H1 (cell line): ENCODE measurements at regions of chr6 and their contacts with region 1.

Region 1: GRCh38 chr6:125858427-125859320 is 67.9 kb downstream of the NCOA7 start:
- DNase-seq: peak; percentile 68 to 69
- H3K4me3 ChIP-seq: no peak overlapping the region
- H3K27ac ChIP-seq: no peak overlapping the region
- H3K4me1 ChIP-seq: no peaks in the 10 kb centered on the region
- H3K27me3 ChIP-seq: no peaks in the 10 kb centered on the region
- CTCF ChIP-seq: peak; percentile 84 to 97 (median 90)
- EP300 ChIP-seq: no peak
- POLR2A ChIP-seq: no peak
- RAD21 ChIP-seq: peak; percentile 87 to 92

Region 2: GRCh38 chr6:125753218-125753936 is 105.3 kb before region 1 on chr6:
- CTCF ChIA-PET with region 1: no interaction called
- POLR2A ChIA-PET with region 1: no interaction called
- DNase-seq: no peak
- H3K4me3 ChIP-seq: peak overlapping the region in 1 of 4 experiments; percentile 30; a peak in 1 of 8 replicates
- H3K27ac ChIP-seq: no peak overlapping the region
- H3K4me1 ChIP-seq: peaks cover 0 to 14% (median 2%) of the 10 kb centered on the region in 4 experiments; a peak in 4 of 7 replicates
- H3K27me3 ChIP-seq: peaks cover 0 to 10% (median 8%) of the 10 kb centered on the region in 4 experiments; a peak in 6 of 7 replicates
- CTCF ChIP-seq: peak in 1 of 3 experiments; percentile 34; a peak in 1 of 4 replicates
- EP300 ChIP-seq: no peak
- POLR2A ChIP-seq: no peak
- RAD21 ChIP-seq: peak in 1 of 2 experiments; percentile 15; a peak in 2 of 4 replicates

Region 3: GRCh38 chr6:125812394-125813292 is 46.0 kb before region 1 on chr6:
- CTCF ChIA-PET with region 1: interaction called, 10 read pairs
- POLR2A ChIA-PET with region 1: no interaction called
- DNase-seq: no peak
- H3K4me3 ChIP-seq: no peak overlapping the region
- H3K27ac ChIP-seq: no peak overlapping the region
- H3K4me1 ChIP-seq: no peaks in the 10 kb centered on the region
- H3K27me3 ChIP-seq: no peaks in the 10 kb centered on the region
- CTCF ChIP-seq: no peak
- EP300 ChIP-seq: no peak
- POLR2A ChIP-seq: no peak
- RAD21 ChIP-seq: no peak

Region 4: DNA sequence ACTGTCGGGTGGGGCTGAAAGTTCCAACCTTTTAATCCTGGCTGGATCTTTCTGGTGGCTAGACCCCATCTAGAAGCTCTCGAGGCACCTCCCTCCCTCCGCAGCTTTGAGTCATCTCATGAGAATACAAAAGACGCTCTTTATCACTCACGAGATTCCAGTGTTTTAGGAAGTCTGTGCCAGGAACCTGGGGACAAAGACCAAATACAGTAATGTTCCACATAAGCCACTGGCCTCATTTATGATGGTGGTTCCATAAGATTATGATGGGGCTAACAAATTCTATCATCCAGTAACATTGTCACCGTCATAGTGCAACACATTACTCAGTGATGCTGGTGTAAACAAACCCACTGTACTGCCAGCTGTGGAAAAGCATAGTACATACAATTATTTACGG is 19.2 kb before region 1 on chr6:
- CTCF ChIA-PET with region 1: interaction called, 20 read pairs
- POLR2A ChIA-PET with region 1: no interaction called
- DNase-seq: no peak
- H3K4me3 ChIP-seq: no peak overlapping the region
- H3K27ac ChIP-seq: no peak overlapping the region
- H3K4me1 ChIP-seq: no peaks in the 10 kb centered on the region
- H3K27me3 ChIP-seq: no peaks in the 10 kb centered on the region
- CTCF ChIP-seq: no peak
- EP300 ChIP-seq: no peak
- POLR2A ChIP-seq: no peak
- RAD21 ChIP-seq: no peak

Region 5: DNA sequence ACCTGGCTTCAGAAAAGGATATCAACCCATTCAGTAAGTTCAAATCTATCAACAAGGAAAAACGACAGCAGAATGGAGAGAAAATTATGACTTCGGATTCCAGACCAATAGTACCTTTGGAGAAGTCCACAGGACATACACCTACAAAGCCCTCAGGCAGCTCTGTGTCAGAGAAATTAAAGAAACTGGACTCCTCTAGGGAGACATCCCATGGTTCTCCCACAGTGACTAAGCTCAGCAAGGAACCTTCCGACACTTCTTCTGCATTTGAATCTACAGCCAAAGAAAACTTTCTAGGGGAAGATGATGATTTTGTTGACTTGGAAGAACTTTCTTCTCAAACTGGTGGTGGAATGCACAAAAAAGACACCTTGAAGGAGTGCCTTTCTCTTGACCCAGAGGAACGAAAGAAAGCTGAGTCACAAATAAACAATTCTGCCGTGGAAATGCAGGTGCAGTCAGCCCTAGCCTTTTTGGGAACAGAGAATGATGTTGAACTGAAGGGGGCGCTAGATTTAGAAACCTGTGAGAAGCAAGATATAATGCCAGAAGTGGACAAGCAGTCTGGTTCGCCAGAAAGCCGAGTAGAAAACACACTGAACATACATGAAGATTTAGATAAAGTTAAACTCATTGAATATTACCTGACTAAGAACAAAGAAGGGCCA is 30.4 kb after region 1 on chr6:
- CTCF ChIA-PET with region 1: interaction called, 12 read pairs
- POLR2A ChIA-PET with region 1: no interaction called
- DNase-seq: no peak
- H3K4me3 ChIP-seq: no peak overlapping the region
- H3K27ac ChIP-seq: no peak overlapping the region
- H3K4me1 ChIP-seq: no peaks in the 10 kb centered on the region
- H3K27me3 ChIP-seq: no peaks in the 10 kb centered on the region
- CTCF ChIP-seq: peak in 2 of 3 experiments; percentile 63 to 74; a peak in 3 of 4 replicates
- EP300 ChIP-seq: no peak
- POLR2A ChIP-seq: no peak
- RAD21 ChIP-seq: peak; percentile 16 to 36; a peak in 3 of 4 replicates

Region 6: DNA sequence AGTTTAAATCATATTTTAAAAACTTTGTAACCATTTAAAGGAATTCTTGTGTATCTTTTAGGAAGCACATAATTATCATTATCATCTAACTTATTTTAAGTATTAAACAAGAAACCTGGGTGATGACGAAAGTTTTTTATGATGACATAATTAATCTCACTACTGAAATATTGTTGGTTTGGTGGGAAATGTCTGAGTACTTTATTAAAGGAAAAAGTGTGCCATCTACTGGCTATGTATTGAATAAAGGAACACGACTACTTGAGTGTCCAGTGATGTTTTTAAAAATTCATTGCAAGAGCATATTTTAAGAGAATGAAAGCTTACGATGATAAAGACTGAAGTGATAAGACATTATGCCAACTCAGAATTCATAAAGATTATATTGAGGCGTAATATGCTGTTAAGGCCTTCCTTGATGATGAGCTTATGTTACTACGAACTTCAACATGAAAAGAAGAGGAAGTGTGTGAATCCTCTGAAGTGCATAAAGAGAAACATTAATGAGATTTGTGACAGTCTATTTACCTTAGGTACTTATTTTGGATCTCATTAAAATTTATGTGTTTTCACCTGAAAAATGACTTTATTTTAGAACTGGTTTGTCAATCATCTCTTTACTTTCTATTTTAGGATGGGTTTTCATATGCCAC is 115.7 kb after region 1 on chr6:
- CTCF ChIA-PET with region 1: interaction called, 17 read pairs
- POLR2A ChIA-PET with region 1: no interaction called
- DNase-seq: no peak
- H3K4me3 ChIP-seq: no peak overlapping the region
- H3K27ac ChIP-seq: no peak overlapping the region
- H3K4me1 ChIP-seq: no peaks in the 10 kb centered on the region
- H3K27me3 ChIP-seq: no peaks in the 10 kb centered on the region
- CTCF ChIP-seq: peak in 1 of 3 experiments; percentile 22; a peak in 1 of 4 replicates
- EP300 ChIP-seq: no peak
- POLR2A ChIP-seq: no peak
- RAD21 ChIP-seq: peak; percentile 26 to 38